MCF 10A (cell line): ENCODE measurements at regions of chr10 and their contacts with region 1.

Region 1: DNA sequence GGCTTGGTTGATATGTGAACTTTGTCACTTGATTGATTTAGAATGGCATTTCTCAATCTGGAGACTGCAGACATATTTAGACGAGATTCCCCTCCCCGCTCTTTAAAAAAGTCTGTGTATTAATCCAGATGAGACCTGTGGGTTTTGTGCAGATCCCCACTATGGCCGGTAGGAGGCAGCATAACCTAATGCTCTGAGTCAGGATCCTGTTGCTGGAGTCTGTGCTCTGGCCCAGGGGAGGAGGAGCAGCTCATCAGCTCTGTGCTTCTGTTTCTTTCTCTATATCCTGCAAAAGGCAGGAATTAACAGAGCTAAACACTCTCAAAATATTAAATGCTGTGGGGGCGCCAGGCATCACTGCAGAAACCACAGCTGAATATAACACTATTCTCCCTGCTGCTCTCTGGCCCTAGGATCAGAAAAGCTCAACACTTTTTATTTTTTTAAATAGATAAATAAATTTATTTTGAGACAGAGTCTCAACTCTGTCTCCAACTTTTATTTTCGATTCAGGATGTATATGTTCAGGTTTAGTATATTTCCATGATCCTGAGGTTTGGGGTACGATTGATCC is 23.9 kb upstream of the SEPHS1 start:
- DNase-seq: peak; percentile 90
- H3K4me3 Mint-ChIP-seq: no peak overlapping the region
- H3K27ac Mint-ChIP-seq: no peak overlapping the region
- H3K4me1 Mint-ChIP-seq: no peaks in the 10 kb centered on the region
- H3K27me3 Mint-ChIP-seq: no peaks in the 10 kb centered on the region
- CTCF ChIP-seq: peak; percentile 94

Region 2: DNA sequence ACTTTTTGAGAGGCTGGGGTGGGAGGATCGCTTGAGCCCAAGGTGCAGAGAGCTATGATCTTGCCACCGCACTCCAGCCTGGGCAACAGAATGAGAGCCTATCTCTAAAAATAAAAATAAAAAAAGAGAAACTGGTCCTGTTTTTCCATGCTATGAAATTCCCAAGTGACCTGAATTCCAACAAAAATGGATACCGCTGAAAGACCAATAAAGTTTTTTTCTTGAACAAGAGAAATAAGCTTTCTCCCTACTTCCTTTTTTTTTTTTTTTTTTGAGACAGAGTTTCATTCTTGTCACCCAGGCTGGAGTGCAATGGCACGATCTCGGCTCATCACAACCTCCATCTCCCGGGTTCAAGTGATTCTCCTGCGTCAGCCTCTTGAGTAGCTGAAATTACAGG is 11.4 kb before region 1 on chr10:
- CTCF ChIA-PET with region 1: interaction called, 13 read pairs
- POLR2A ChIA-PET with region 1: no interaction called
- intact Hi-C with region 1: no loop called
- DNase-seq: no peak
- H3K4me3 Mint-ChIP-seq: no peak overlapping the region
- H3K27ac Mint-ChIP-seq: no peak overlapping the region
- H3K4me1 Mint-ChIP-seq: no peaks in the 10 kb centered on the region
- H3K27me3 Mint-ChIP-seq: peaks cover 11% of the 10 kb centered on the region
- CTCF ChIP-seq: no peak

Region 3: GRCh38 chr10:13417459-13418126 is 45.6 kb after region 1 on chr10:
- CTCF ChIA-PET with region 1: interaction called, 10 read pairs
- POLR2A ChIA-PET with region 1: no interaction called
- intact Hi-C with region 1: no loop called
- DNase-seq: no peak
- H3K4me3 Mint-ChIP-seq: no peak overlapping the region
- H3K27ac Mint-ChIP-seq: no peak overlapping the region
- H3K4me1 Mint-ChIP-seq: no peaks in the 10 kb centered on the region
- H3K27me3 Mint-ChIP-seq: no peaks in the 10 kb centered on the region
- CTCF ChIP-seq: no peak

Region 4: DNA sequence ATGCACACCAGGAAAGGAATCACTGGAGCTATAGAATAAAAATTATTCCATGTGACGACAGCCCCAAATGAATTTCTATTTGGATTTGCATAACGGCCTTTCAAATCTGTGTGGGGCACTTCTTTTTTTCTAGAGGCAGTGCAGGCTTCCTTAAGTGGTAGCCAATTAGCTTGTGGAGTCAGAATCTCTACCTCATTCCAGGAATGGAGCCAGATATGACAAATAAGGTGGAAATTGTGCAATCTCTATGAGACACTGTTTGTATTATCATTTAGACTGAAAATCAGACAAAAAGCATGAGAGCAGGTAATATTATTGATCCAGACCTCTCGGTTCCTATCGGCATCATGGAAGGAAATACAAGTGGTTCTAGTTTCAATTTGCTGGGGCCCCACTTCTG is 78.1 kb after region 1 on chr10:
- CTCF ChIA-PET with region 1: interaction called, 16 read pairs
- POLR2A ChIA-PET with region 1: no interaction called
- intact Hi-C with region 1: no loop called
- DNase-seq: peak; percentile 86
- H3K4me3 Mint-ChIP-seq: peak overlapping the region; percentile 8
- H3K27ac Mint-ChIP-seq: peak overlapping the region; percentile 44
- H3K4me1 Mint-ChIP-seq: peaks cover 10% of the 10 kb centered on the region
- H3K27me3 Mint-ChIP-seq: no peaks in the 10 kb centered on the region
- CTCF ChIP-seq: no peak

Region 5: GRCh38 chr10:13528875-13529713 is 157.1 kb after region 1 on chr10 and contains the start of gene BEND7:
- CTCF ChIA-PET with region 1: interaction called, 15 read pairs
- POLR2A ChIA-PET with region 1: no interaction called
- intact Hi-C with region 1: no loop called
- DNase-seq: no peak
- H3K4me3 Mint-ChIP-seq: peak within 1 kb of the TSS; percentile 69
- H3K27ac Mint-ChIP-seq: peak within 1 kb of the TSS; percentile 40
- H3K4me1 Mint-ChIP-seq: peaks cover 21% of the 10 kb centered on the region
- H3K27me3 Mint-ChIP-seq: no peaks in the 10 kb centered on the region
- CTCF ChIP-seq: no peak
- total RNA-seq, gene BEND7: 12.4 and 17.2 TPM in 2 replicates

Region 6: DNA sequence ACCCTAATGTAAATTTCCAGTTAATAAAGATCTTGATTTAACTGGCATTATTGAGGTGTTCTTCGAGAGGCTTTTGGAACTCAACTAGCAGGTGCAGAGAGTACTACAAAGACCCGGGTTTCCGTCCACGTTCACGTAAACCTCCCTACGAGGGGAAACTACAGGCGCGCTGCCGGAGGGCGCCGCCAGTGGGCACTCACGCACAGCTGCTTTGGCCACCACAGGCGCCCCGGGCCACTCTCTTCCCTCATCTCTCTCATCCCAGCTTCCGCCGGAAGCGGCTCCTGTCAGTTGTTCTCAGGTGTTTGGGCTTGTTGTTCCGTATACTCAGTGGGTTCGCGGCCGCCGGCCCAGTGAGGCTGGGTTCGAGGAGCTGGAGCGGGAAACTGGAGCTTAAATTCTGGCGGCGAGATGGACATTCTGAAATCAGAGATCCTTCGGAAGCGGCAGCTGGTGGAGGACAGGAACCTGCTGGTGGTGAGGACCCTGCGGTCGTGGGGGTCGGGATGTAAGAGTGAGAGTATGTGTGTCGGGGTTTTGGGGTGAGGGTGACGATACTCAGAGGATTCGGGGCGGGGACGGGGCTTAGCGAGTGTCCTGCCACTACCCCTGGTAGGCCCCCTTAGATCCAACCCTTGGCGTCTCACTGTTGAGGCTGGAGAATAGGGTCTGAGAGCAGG is 214.8 kb after region 1 on chr10 and contains the start of gene PRPF18:
- CTCF ChIA-PET with region 1: interaction called, 61 read pairs
- POLR2A ChIA-PET with region 1: interaction called, 8 read pairs
- intact Hi-C with region 1: loop called (anchors 1 kb)
- DNase-seq: peak; percentile 93
- H3K4me3 Mint-ChIP-seq: peak within 1 kb of the TSS; percentile 99
- H3K27ac Mint-ChIP-seq: peak within 1 kb of the TSS; percentile 100
- H3K4me1 Mint-ChIP-seq: peaks cover 6% of the 10 kb centered on the region
- H3K27me3 Mint-ChIP-seq: peaks cover 22% of the 10 kb centered on the region
- CTCF ChIP-seq: peak; percentile 93
- total RNA-seq, gene PRPF18: 27.8 and 31.6 TPM in 2 replicates

Region 7: DNA sequence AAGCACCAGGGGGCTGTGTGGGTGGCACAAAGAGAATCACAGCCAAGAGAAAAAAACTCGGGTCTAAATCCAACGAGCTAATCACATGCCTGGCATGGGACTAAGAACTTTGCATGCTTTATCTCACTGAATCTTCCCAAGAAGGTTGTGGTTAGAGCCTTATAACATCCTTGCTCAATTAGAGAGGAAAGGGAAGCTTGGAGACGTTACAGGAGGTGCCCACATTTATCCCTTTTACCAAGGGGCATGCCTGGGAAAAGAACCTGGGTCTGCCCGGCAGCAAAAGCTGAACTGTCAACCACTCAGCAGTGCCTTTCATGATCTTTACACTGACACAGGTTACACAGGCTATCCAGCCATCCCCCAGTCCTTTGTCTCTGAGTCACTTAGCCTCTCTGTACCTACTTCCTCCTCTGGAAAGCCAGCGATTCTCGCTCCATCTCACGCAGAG is 404.9 kb after region 1 on chr10:
- CTCF ChIA-PET with region 1: interaction called, 5 read pairs
- POLR2A ChIA-PET with region 1: no interaction called
- intact Hi-C with region 1: loop called (anchors 2 kb)
- DNase-seq: peak; percentile 17
- H3K4me3 Mint-ChIP-seq: no peak overlapping the region
- H3K27ac Mint-ChIP-seq: no peak overlapping the region
- H3K4me1 Mint-ChIP-seq: peaks cover 18% of the 10 kb centered on the region
- H3K27me3 Mint-ChIP-seq: no peaks in the 10 kb centered on the region
- CTCF ChIP-seq: no peak